Activated CD4-positive, alpha-beta T cell treated with anti-CD3 and anti-CD28 coated beads for 36 hours (primary cell): ENCODE measurements at regions of chr10 and their contacts with region 1.

Region 1: GRCh38 chr10:26464632-26465280 is 26.6 kb downstream of the APBB1IP start:
- DNase-seq: no peak
- ATAC-seq: peak; percentile 31
- H3K4me3 Mint-ChIP-seq: no peak overlapping the region
- H3K27ac Mint-ChIP-seq: no peak overlapping the region
- H3K4me1 Mint-ChIP-seq: peaks cover 78% of the 10 kb centered on the region
- H3K27me3 Mint-ChIP-seq: no peaks in the 10 kb centered on the region

Region 2: GRCh38 chr10:26475386-26475785 is 10.6 kb after region 1 on chr10:
- CTCF ChIA-PET with region 1: interaction called, 4 read pairs
- POLR2A ChIA-PET with region 1: no interaction called
- intact Hi-C with region 1: loop called in 1 of 2 experiments (anchors 1 kb)
- DNase-seq: no peak
- ATAC-seq: peak; percentile 8
- H3K4me3 Mint-ChIP-seq: peak overlapping the region; percentile 47
- H3K27ac Mint-ChIP-seq: peak overlapping the region; percentile 92
- H3K4me1 Mint-ChIP-seq: peaks cover 85% of the 10 kb centered on the region
- H3K27me3 Mint-ChIP-seq: no peaks in the 10 kb centered on the region

Region 3: DNA sequence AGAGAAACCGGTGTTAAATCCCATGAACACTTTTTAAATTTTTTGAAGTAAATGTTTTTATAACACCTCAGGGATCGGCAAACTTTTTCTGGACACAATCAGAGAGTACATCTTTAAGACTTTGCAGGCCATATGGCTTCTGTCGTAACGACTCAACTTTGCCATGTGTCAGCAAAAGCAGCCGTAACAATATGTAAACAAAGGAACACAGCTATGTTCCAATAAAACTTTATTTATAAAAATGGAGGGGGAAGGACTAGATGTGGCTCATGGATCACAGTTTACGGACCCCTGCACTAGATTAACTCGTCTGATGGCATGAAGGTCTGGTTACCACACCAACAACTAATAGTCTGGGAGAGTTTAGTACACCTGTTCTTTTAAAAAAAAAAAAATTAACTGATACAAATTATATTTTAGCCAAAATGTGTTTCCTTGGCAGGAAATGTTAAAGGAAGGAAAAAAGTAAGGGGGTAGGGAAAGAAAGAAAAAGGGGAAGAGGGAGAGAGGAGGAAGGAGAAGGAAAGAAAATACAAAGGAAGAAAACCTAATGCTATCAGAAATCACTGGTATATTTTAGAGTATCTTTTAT is 345.8 kb after region 1 on chr10:
- CTCF ChIA-PET with region 1: no interaction called
- POLR2A ChIA-PET with region 1: no interaction called
- intact Hi-C with region 1: no loop called
- DNase-seq: no peak
- ATAC-seq: no peak
- H3K4me3 Mint-ChIP-seq: no peak overlapping the region
- H3K27ac Mint-ChIP-seq: no peak overlapping the region
- H3K4me1 Mint-ChIP-seq: peaks cover 61% of the 10 kb centered on the region
- H3K27me3 Mint-ChIP-seq: no peaks in the 10 kb centered on the region